MCF 10A (cell line): ENCODE measurements at regions of chr6 and their contacts with region 1.

Region 1: DNA sequence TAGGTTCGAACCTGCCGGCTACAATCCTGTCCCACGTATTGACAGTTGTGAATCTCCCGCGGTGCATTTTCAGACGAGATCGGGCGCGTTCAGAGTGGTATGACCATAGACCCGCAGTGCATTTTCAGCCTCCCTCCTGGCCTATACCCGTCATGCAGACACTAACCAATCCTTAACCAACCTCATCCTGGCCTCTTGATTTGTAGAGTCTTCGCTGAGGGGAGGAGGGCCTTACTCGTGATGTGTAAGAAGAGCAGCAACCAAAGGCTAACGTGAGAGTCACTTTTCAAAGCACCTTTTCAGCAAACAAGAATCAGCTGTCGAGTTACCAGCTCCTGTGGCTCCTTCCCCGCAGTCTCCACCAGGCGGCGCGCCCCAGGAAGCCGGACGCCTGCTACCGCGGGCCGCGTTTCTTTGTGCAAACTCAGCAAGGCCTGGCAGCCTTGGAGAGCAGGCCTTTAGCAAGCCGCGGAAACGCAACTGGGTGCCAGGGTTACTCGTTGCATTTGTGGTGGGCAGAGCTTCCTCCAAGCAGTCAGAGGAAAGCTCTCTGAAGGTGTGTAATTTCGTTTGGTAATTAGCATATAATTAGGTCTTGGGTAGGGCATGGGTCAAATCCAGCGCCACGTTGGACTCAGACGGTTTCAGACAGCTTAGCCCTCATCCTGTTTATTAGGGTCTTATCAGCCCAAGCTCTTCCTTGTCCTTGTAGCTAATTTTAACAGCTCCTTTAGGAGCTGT is 139.8 kb downstream of the OR2B2 start:
- DNase-seq: peak; percentile 87
- H3K4me3 Mint-ChIP-seq: peak overlapping the region; percentile 53
- H3K27ac Mint-ChIP-seq: no peak overlapping the region
- H3K4me1 Mint-ChIP-seq: peaks cover 9% of the 10 kb centered on the region
- H3K27me3 Mint-ChIP-seq: no peaks in the 10 kb centered on the region
- CTCF ChIP-seq: peak; percentile 89

Region 2: DNA sequence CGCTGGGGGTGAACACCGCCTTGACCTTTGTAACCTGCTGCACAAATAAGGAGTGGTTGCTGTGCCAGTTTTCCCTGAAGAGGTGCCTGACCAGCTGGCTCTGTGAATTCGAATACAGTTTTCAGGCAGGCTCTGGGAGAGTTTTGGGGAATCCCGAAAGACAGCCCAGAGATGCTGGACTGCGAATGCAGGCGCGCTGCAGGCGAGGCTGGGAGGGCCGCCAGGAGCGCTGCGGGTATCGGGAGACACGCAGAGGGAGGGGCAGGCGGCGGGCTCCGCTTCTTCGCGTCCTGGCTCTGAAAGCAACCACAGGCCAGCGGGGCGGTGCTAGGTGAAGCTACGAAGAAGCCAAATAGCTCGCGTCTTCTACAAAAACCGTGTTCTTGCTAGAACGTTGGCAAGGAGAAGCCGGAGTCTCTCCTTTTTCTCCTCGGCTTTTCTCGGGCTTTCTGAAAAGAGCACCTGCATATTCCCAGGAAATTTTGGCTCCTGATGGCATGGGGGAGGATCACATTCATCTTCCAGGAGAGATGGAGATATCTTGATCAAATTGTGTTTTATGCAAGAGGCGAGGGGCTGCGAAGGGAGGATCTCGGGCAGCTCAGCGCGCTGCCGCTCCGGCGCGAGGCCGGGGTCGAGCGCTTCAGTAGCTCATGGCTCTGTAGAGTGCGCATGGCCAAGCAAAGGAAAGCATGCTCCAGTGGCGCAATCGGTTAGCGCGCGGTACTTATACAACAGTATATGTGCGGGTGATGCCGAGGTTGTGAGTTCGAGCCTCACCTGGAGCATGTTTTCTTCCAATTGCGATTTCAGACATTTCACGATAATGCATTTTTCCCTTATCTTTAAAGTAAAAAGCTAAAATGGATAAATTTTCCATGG is 141.5 kb before region 1 on chr6:
- CTCF ChIA-PET with region 1: no interaction called
- POLR2A ChIA-PET with region 1: no interaction called
- intact Hi-C with region 1: no loop called
- DNase-seq: peak; percentile 79
- H3K4me3 Mint-ChIP-seq: peak overlapping the region; percentile 85
- H3K27ac Mint-ChIP-seq: peak overlapping the region; percentile 73
- H3K4me1 Mint-ChIP-seq: no peaks in the 10 kb centered on the region
- H3K27me3 Mint-ChIP-seq: no peaks in the 10 kb centered on the region
- CTCF ChIP-seq: no peak

Region 3: DNA sequence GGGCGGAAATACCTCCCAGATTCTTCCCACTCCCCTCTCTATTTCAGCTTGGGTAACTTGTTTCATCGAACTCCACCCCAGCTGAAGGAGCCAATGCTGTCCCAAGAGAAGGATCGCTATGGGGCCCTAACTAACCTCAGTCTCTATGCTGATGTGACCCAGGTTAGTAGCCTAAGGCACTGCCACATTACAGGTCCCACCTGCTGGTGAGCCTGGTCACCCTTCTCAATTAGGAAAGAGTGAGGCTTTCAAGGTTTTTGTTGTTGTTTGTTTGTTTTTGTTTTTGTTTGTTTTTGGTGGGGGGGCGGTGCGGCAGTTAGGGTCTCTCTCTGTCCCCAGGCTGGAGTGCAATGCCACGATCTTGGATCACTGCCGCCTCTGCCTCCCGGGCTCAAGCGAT is 28.6 kb before region 1 on chr6:
- CTCF ChIA-PET with region 1: no interaction called
- POLR2A ChIA-PET with region 1: no interaction called
- intact Hi-C with region 1: no loop called
- DNase-seq: no peak
- H3K4me3 Mint-ChIP-seq: no peak overlapping the region
- H3K27ac Mint-ChIP-seq: no peak overlapping the region
- H3K4me1 Mint-ChIP-seq: no peaks in the 10 kb centered on the region
- H3K27me3 Mint-ChIP-seq: no peaks in the 10 kb centered on the region
- CTCF ChIP-seq: no peak

Region 4: GRCh38 chr6:27761391-27761790 is 11.0 kb before region 1 on chr6:
- CTCF ChIA-PET with region 1: interaction called, 16 read pairs
- POLR2A ChIA-PET with region 1: interaction called, 8 read pairs
- intact Hi-C with region 1: no loop called
- DNase-seq: peak; percentile 40
- H3K4me3 Mint-ChIP-seq: no peak overlapping the region
- H3K27ac Mint-ChIP-seq: no peak overlapping the region
- H3K4me1 Mint-ChIP-seq: peaks cover 15% of the 10 kb centered on the region
- H3K27me3 Mint-ChIP-seq: no peaks in the 10 kb centered on the region
- CTCF ChIP-seq: no peak

Region 5: GRCh38 chr6:27785294-27785693 is 12.9 kb after region 1 on chr6:
- CTCF ChIA-PET with region 1: interaction called, 25 read pairs
- POLR2A ChIA-PET with region 1: interaction called, 4 read pairs
- intact Hi-C with region 1: no loop called
- DNase-seq: no peak
- H3K4me3 Mint-ChIP-seq: no peak overlapping the region
- H3K27ac Mint-ChIP-seq: no peak overlapping the region
- H3K4me1 Mint-ChIP-seq: no peaks in the 10 kb centered on the region
- H3K27me3 Mint-ChIP-seq: no peaks in the 10 kb centered on the region
- CTCF ChIP-seq: no peak

Region 6: DNA sequence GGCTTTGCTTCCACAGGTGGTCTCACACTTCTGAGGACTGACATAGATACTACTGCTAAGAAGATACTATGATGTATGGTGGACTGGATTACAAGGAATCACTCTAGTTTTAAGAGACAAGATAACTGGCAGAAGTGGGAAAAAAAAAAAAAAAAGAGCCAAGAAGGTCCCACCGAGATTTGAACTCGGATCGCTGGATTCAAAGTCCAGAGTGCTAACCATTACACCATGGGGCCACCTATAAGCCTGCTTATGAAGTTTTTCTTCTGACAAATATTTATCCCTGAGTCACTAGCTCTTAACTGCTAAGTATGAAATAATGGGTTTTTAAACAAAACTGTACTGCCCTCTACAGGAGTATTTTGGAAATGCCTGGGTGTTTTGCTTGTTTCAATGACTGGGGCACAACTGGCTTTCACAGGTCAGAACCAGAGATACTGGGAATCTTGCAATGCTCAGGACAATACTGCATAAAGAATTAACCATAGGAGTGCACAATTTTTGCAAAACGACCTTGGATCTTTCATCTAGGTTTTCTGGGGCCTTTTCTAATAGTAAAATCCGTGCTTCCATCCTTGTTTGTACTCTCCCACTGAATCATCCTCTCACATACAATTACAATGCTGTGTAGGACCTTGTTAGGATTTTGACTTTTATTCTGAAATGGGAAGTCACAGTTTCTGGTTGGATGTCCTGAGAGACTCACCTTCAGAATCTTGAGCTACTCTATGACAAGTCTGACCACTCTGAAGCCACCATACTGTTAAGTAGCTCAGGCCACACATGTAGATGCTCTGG is 23.5 kb after region 1 on chr6:
- CTCF ChIA-PET with region 1: interaction called, 4 read pairs
- POLR2A ChIA-PET with region 1: interaction called, 8 read pairs
- intact Hi-C with region 1: loop called (anchors 1 kb)
- DNase-seq: peak; percentile 91
- H3K4me3 Mint-ChIP-seq: no peak overlapping the region
- H3K27ac Mint-ChIP-seq: no peak overlapping the region
- H3K4me1 Mint-ChIP-seq: peaks cover 5% of the 10 kb centered on the region
- H3K27me3 Mint-ChIP-seq: no peaks in the 10 kb centered on the region
- CTCF ChIP-seq: peak; percentile 79